Activated naive CD4-positive, alpha-beta T cell treated with anti-CD3 and anti-CD28 coated beads for 36 hours (primary cell): ENCODE measurements at regions of chr11 and their contacts with region 1.

Region 1: DNA sequence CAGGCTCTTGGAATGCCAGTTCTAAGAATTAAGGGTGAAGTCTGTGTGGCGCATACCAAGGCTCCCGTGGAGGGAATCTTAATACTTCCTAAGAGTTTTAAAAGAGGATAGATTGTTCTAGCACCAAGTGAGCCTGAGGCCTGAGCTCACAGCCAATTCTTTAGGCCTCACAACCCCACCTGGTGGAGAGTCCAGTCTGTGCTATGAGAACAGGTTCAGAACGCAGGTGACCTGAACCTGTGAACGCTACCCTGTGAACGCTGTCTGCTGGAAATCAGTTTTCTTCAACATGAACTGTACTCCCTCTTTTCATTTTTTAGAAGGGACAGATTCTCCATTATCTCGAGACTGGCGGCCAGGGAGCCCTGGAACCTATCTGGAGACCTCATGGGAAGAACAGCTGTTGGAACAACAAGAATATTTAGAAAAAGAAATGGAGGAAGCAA is 43.2 kb upstream of the DLAT start:
- DNase-seq: peak; percentile 85
- H3K4me3 Mint-ChIP-seq: no peak overlapping the region
- H3K27ac Mint-ChIP-seq: no peak overlapping the region
- H3K4me1 Mint-ChIP-seq: peaks cover 12% of the 10 kb centered on the region
- H3K27me3 Mint-ChIP-seq: peaks cover 26% of the 10 kb centered on the region

Region 2: GRCh38 chr11:111938687-111939160 is 43.3 kb before region 1 on chr11:
- CTCF ChIA-PET with region 1: interaction called, 125 read pairs
- intact Hi-C with region 1: no loop called
- DNase-seq: peak; percentile 75
- H3K4me3 Mint-ChIP-seq: peak overlapping the region; percentile 76
- H3K27ac Mint-ChIP-seq: peak overlapping the region; percentile 84
- H3K4me1 Mint-ChIP-seq: peaks cover 43% of the 10 kb centered on the region
- H3K27me3 Mint-ChIP-seq: no peaks in the 10 kb centered on the region

Region 3: GRCh38 chr11:111992206-111992855 is 10.3 kb after region 1 on chr11:
- CTCF ChIA-PET with region 1: interaction called, 10 read pairs
- intact Hi-C with region 1: no loop called
- DNase-seq: no peak
- H3K4me3 Mint-ChIP-seq: no peak overlapping the region
- H3K27ac Mint-ChIP-seq: no peak overlapping the region
- H3K4me1 Mint-ChIP-seq: no peaks in the 10 kb centered on the region
- H3K27me3 Mint-ChIP-seq: no peaks in the 10 kb centered on the region

Region 4: GRCh38 chr11:112033156-112033555 is 51.1 kb after region 1 on chr11:
- CTCF ChIA-PET with region 1: no interaction called
- intact Hi-C with region 1: no loop called
- DNase-seq: no peak
- H3K4me3 Mint-ChIP-seq: no peak overlapping the region
- H3K27ac Mint-ChIP-seq: no peak overlapping the region
- H3K4me1 Mint-ChIP-seq: peaks cover 11% of the 10 kb centered on the region
- H3K27me3 Mint-ChIP-seq: no peaks in the 10 kb centered on the region